ENCODE measurements at regions of chr12 and their contacts with region 1.

Region 1: DNA sequence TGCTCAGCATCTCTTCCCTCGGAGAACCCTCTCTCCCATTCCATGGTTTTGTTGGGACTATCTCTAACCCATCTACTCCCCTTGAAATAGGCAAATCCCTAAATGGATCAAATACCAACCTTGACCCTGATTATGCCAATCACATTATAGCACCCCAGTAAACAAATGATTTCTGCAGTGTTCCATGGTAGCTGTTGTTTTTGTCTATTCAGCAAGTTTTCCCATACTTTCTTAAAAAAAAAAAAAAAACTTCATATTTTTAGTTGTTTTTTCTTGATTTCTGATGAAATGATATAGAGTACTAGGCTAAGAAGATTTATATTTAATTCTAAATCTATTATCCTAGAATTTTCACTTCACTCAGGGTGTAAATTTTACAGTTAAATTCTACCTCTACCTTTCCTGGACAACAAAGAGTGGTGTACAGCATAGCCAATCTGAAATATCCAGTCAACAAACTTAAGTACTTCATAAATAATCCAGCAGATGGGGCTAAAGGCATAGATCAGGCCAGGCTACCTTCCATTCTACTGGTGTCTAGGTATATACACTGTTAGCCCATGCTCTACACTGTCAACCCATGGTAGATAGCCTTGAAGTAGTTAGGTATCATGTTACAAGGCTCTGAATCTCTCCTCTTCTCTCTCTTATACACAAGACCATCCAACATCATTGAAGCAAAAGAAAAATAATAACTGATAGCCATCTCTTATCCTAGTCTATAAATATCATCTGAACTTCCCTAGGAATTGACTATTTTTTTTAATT is 82.2 kb downstream of the PLEKHG7 start:
- DNase-seq: peak in 7 of 9 donors; percentile 61 to 80 (median 70)
- ATAC-seq: peak; percentile 99
- H3K4me3 ChIP-seq: no peak overlapping the region
- H3K4me3 Mint-ChIP-seq: no peak overlapping the region
- H3K27ac ChIP-seq: no peak overlapping the region
- H3K27ac Mint-ChIP-seq: peak overlapping the region in 1 of 9 donors; percentile 0
- H3K4me1 ChIP-seq: no peaks in the 10 kb centered on the region
- H3K4me1 Mint-ChIP-seq: peaks cover 4 to 19% (median 9%) of the 10 kb centered on the region in 7 donors
- H3K27me3 ChIP-seq: no peaks in the 10 kb centered on the region
- H3K27me3 Mint-ChIP-seq: no peaks in the 10 kb centered on the region

Region 2: GRCh38 chr12:91361864-91362263 is 1423.1 kb before region 1 on chr12:
- CTCF ChIA-PET with region 1: no interaction called
- POLR2A ChIA-PET with region 1: no interaction called
- intact Hi-C with region 1: loop called in 1 of 2 experiments (anchors 5 kb)
- DNase-seq: peak in 7 of 9 donors; percentile 15 to 57 (median 46)
- ATAC-seq: peak; percentile 63
- H3K4me3 ChIP-seq: no peak overlapping the region
- H3K4me3 Mint-ChIP-seq: peak overlapping the region in 1 of 10 donors; percentile 11
- H3K27ac ChIP-seq: no peak overlapping the region
- H3K27ac Mint-ChIP-seq: peak overlapping the region in 1 of 9 donors; percentile 41
- H3K4me1 ChIP-seq: no peaks in the 10 kb centered on the region
- H3K4me1 Mint-ChIP-seq: peaks cover 0 to 4% (median 3%) of the 10 kb centered on the region in 7 donors
- H3K27me3 ChIP-seq: no peaks in the 10 kb centered on the region
- H3K27me3 Mint-ChIP-seq: peaks cover 0 to 16% (median 0%) of the 10 kb centered on the region in 5 donors

Region 3: GRCh38 chr12:92145731-92146496 is 639.1 kb before region 1 on chr12 and contains the start of gene BTG1:
- CTCF ChIA-PET with region 1: no interaction called
- POLR2A ChIA-PET with region 1: no interaction called
- intact Hi-C with region 1: no loop called
- DNase-seq: peak; percentile 90 to 100 (median 100)
- ATAC-seq: peak; percentile 84
- H3K4me3 ChIP-seq: peak within 1 kb of the TSS; percentile 98
- H3K4me3 Mint-ChIP-seq: peak within 1 kb of the TSS; percentile 94 to 100 (median 98)
- H3K27ac ChIP-seq: peak within 1 kb of the TSS; percentile 91
- H3K27ac Mint-ChIP-seq: peak within 1 kb of the TSS; percentile 98 to 100 (median 99)
- H3K4me1 ChIP-seq: peaks cover 7 to 14% of the 10 kb centered on the region in 2 donors
- H3K4me1 Mint-ChIP-seq: peaks cover 18 to 34% (median 27%) of the 10 kb centered on the region in 7 donors
- H3K27me3 ChIP-seq: no peaks in the 10 kb centered on the region
- H3K27me3 Mint-ChIP-seq: peaks cover 0 to 4% (median 0%) of the 10 kb centered on the region in 5 donors
- total RNA-seq, gene BTG1: 188 to 1,246 (median 571) TPM

Region 4: DNA sequence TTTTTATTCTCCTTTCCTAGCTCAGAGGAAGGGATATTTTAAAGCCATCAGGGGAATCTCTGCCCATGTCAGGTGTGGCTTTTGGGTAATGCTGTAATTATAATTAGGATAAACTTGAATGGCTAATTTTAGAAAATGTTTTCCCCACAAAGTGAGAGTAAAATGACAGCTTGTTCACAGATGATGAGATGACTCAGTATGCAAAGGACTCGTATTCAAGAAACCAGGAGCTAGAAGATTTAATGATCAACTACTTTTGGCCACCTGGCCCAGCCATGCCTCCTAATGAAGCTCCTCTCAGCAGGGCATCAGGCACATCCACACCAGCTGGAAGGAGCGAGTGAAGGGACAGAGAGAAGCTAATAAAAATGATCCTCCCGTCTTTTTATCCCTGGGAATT is 111.2 kb before region 1 on chr12:
- CTCF ChIA-PET with region 1: no interaction called
- POLR2A ChIA-PET with region 1: no interaction called
- intact Hi-C with region 1: no loop called
- DNase-seq: no peak
- ATAC-seq: no peak
- H3K4me3 ChIP-seq: no peak overlapping the region
- H3K4me3 Mint-ChIP-seq: no peak overlapping the region
- H3K27ac ChIP-seq: no peak overlapping the region
- H3K27ac Mint-ChIP-seq: no peak overlapping the region
- H3K4me1 ChIP-seq: no peaks in the 10 kb centered on the region
- H3K4me1 Mint-ChIP-seq: peaks cover 0 to 3% (median 0%) of the 10 kb centered on the region in 7 donors
- H3K27me3 ChIP-seq: no peaks in the 10 kb centered on the region
- H3K27me3 Mint-ChIP-seq: peaks cover 0 to 8% (median 0%) of the 10 kb centered on the region in 5 donors

Region 5: DNA sequence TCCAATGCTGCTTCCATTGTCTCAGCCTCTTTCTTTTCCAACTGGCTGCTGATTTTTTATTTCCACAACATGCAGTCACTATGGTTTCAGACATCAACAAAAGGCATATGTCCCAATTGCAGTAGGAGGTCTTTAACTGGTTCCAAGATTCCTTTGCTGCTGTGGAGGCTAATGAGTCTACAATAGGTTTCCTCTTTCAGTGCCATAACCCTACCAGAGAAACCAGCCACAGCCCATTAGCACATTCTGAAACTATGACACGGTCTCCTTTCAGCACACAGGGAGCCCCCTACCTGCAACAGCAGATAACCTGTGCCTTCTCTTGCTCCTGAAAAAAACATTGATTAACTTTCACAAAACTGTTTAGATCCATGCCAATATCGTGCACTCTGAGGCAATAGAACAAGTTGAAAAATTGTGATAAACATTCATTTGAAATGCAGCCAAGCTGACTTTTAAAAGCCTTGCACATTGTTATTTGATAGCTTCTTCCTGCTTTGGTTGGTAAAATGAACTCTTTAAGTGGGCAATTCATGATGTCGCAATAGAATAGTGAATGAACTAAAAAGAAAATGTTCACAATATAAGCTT is 49.8 kb before region 1 on chr12:
- CTCF ChIA-PET with region 1: no interaction called
- POLR2A ChIA-PET with region 1: no interaction called
- intact Hi-C with region 1: no loop called
- DNase-seq: no peak
- ATAC-seq: no peak
- H3K4me3 ChIP-seq: no peak overlapping the region
- H3K4me3 Mint-ChIP-seq: no peak overlapping the region
- H3K27ac ChIP-seq: no peak overlapping the region
- H3K27ac Mint-ChIP-seq: peak overlapping the region in 2 of 9 donors; percentile 2 to 18
- H3K4me1 ChIP-seq: no peaks in the 10 kb centered on the region
- H3K4me1 Mint-ChIP-seq: peaks cover 0 to 29% (median 14%) of the 10 kb centered on the region in 7 donors
- H3K27me3 ChIP-seq: no peaks in the 10 kb centered on the region
- H3K27me3 Mint-ChIP-seq: peaks cover 0 to 9% (median 3%) of the 10 kb centered on the region in 5 donors

Region 6: DNA sequence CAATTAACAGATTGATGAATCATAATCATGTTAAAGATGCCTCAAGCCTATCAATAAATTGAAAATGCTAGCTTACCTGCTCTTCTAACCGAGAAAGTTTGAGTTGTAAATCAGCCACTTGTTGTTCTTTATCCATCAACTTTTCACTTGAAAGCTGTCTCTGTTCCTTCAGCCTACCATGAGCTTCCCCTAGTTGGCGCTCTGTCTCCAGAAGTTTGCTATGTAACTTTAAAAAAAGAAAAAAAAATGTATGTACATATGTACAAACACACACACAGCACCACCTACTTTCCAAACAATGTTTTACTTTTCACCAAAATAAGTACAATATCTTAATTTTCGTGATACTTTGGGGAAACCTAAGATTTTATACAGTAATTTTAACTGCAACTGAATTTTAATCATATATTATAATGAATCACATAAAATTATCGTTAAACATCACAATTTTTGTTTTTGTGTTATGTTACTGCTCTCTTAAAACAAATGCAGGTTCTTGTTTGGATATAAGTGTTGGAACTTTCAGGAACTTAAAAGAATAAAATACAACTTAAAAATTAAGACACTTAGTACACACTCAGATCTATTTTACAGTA is 43.0 kb after region 1 on chr12:
- CTCF ChIA-PET with region 1: no interaction called
- POLR2A ChIA-PET with region 1: interaction called, 5 read pairs
- intact Hi-C with region 1: loop called in 1 of 2 experiments (anchors 1 kb)
- DNase-seq: peak in 7 of 9 donors; percentile 19 to 58 (median 37)
- ATAC-seq: peak; percentile 74
- H3K4me3 ChIP-seq: no peak overlapping the region
- H3K4me3 Mint-ChIP-seq: no peak overlapping the region
- H3K27ac ChIP-seq: no peak overlapping the region
- H3K27ac Mint-ChIP-seq: no peak overlapping the region
- H3K4me1 ChIP-seq: no peaks in the 10 kb centered on the region
- H3K4me1 Mint-ChIP-seq: peaks cover 0 to 8% (median 2%) of the 10 kb centered on the region in 7 donors
- H3K27me3 ChIP-seq: no peaks in the 10 kb centered on the region
- H3K27me3 Mint-ChIP-seq: no peaks in the 10 kb centered on the region

Region 7: GRCh38 chr12:93098077-93098476 is 313.1 kb after region 1 on chr12:
- CTCF ChIA-PET with region 1: interaction called, 5 read pairs
- POLR2A ChIA-PET with region 1: no interaction called
- intact Hi-C with region 1: loop called (anchors 1 kb)
- DNase-seq: peak; percentile 33 to 75 (median 62)
- ATAC-seq: peak; percentile 96
- H3K4me3 ChIP-seq: no peak overlapping the region
- H3K4me3 Mint-ChIP-seq: no peak overlapping the region
- H3K27ac ChIP-seq: no peak overlapping the region
- H3K27ac Mint-ChIP-seq: peak overlapping the region in 1 of 9 donors; percentile 2
- H3K4me1 ChIP-seq: no peaks in the 10 kb centered on the region
- H3K4me1 Mint-ChIP-seq: peaks cover 4 to 9% (median 5%) of the 10 kb centered on the region in 7 donors
- H3K27me3 ChIP-seq: no peaks in the 10 kb centered on the region
- H3K27me3 Mint-ChIP-seq: no peaks in the 10 kb centered on the region

Region 8: GRCh38 chr12:93397412-93397811 is 612.4 kb after region 1 on chr12:
- CTCF ChIA-PET with region 1: interaction called, 7 read pairs
- POLR2A ChIA-PET with region 1: no interaction called
- intact Hi-C with region 1: loop called (anchors 1 kb)
- DNase-seq: no peak
- ATAC-seq: no peak
- H3K4me3 ChIP-seq: no peak overlapping the region
- H3K4me3 Mint-ChIP-seq: no peak overlapping the region
- H3K27ac ChIP-seq: no peak overlapping the region
- H3K27ac Mint-ChIP-seq: peak overlapping the region in 1 of 9 donors; percentile 25
- H3K4me1 ChIP-seq: no peaks in the 10 kb centered on the region
- H3K4me1 Mint-ChIP-seq: peaks cover 0 to 8% (median 5%) of the 10 kb centered on the region in 7 donors
- H3K27me3 ChIP-seq: no peaks in the 10 kb centered on the region
- H3K27me3 Mint-ChIP-seq: no peaks in the 10 kb centered on the region

Region 9: DNA sequence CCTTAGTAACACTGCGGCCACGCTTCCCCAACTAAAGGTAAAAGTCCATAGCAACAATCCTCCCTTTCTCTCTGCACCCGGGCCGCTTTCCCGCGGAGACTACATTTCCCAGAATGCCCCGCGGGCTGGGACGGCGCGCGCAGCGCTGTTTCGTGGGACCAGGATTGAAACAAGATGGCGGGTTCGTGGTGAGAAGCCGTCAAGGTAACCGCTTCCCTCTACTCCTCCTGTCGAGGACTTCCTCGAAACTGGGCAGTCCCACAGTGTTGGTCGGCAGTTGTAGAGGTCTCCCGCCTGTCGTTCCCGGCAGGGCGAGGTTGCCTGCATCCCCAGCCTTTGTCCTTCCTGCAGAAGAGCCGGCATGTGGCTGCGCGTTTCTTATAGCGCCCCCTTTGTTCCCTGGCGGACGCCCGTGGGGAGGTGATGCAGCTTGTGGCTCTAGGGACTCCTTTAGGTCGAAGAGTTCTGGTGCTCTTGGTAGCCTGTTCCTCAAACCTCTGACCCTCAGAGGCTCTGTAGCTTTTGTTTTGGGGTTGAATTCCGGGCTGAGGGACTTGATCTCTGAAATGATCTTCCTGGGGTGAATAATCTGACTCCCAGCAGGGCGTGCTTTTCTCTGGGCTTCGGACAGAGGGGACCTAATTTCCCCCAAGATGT is 682.5 kb after region 1 on chr12 and contains the start of gene MRPL42:
- CTCF ChIA-PET with region 1: no interaction called
- POLR2A ChIA-PET with region 1: no interaction called
- intact Hi-C with region 1: loop called in 1 of 2 experiments (anchors 1 kb)
- DNase-seq: peak; percentile 86 to 96 (median 94)
- ATAC-seq: peak; percentile 97
- H3K4me3 ChIP-seq: peak within 1 kb of the TSS; percentile 94
- H3K4me3 Mint-ChIP-seq: peak within 1 kb of the TSS; percentile 85 to 96 (median 93)
- H3K27ac ChIP-seq: peak within 1 kb of the TSS; percentile 85
- H3K27ac Mint-ChIP-seq: peak within 1 kb of the TSS; percentile 90 to 98 (median 95)
- H3K4me1 ChIP-seq: peaks cover 8 to 10% of the 10 kb centered on the region in 2 donors
- H3K4me1 Mint-ChIP-seq: peaks cover 28 to 48% (median 36%) of the 10 kb centered on the region in 7 donors
- H3K27me3 ChIP-seq: no peaks in the 10 kb centered on the region
- H3K27me3 Mint-ChIP-seq: no peaks in the 10 kb centered on the region
- total RNA-seq, gene MRPL42: 30.1 to 65.8 (median 45.6) TPM

Region 10: GRCh38 chr12:93502802-93503623 is 718.0 kb after region 1 on chr12:
- CTCF ChIA-PET with region 1: interaction called, 4 read pairs
- POLR2A ChIA-PET with region 1: no interaction called
- intact Hi-C with region 1: loop called in 1 of 2 experiments (anchors 2 kb)
- DNase-seq: peak; percentile 16 to 71 (median 54)
- ATAC-seq: peak; percentile 67
- H3K4me3 ChIP-seq: no peak overlapping the region
- H3K4me3 Mint-ChIP-seq: no peak overlapping the region
- H3K27ac ChIP-seq: no peak overlapping the region
- H3K27ac Mint-ChIP-seq: peak overlapping the region in 3 of 9 donors; percentile 36 to 69 (median 60)
- H3K4me1 ChIP-seq: no peaks in the 10 kb centered on the region
- H3K4me1 Mint-ChIP-seq: peaks cover 0 to 29% (median 0%) of the 10 kb centered on the region in 7 donors
- H3K27me3 ChIP-seq: no peaks in the 10 kb centered on the region
- H3K27me3 Mint-ChIP-seq: no peaks in the 10 kb centered on the region

Region 11: GRCh38 chr12:94779485-94779884 is 1994.5 kb after region 1 on chr12:
- CTCF ChIA-PET with region 1: no interaction called
- POLR2A ChIA-PET with region 1: no interaction called
- intact Hi-C with region 1: no loop called
- DNase-seq: no peak
- ATAC-seq: no peak
- H3K4me3 ChIP-seq: no peak overlapping the region
- H3K4me3 Mint-ChIP-seq: peak overlapping the region in 1 of 10 donors; percentile 35
- H3K27ac ChIP-seq: no peak overlapping the region
- H3K27ac Mint-ChIP-seq: no peak overlapping the region
- H3K4me1 ChIP-seq: no peaks in the 10 kb centered on the region
- H3K4me1 Mint-ChIP-seq: peaks cover 0 to 4% (median 0%) of the 10 kb centered on the region in 7 donors
- H3K27me3 ChIP-seq: no peaks in the 10 kb centered on the region
- H3K27me3 Mint-ChIP-seq: peaks cover 14 to 39% (median 19%) of the 10 kb centered on the region in 5 donors

Measured in naive thymus-derived CD4-positive, alpha-beta T cell (primary cell).